PC-9 (cell line): ENCODE measurements at regions of chr3 and their contacts with region 1.

Region 1: DNA sequence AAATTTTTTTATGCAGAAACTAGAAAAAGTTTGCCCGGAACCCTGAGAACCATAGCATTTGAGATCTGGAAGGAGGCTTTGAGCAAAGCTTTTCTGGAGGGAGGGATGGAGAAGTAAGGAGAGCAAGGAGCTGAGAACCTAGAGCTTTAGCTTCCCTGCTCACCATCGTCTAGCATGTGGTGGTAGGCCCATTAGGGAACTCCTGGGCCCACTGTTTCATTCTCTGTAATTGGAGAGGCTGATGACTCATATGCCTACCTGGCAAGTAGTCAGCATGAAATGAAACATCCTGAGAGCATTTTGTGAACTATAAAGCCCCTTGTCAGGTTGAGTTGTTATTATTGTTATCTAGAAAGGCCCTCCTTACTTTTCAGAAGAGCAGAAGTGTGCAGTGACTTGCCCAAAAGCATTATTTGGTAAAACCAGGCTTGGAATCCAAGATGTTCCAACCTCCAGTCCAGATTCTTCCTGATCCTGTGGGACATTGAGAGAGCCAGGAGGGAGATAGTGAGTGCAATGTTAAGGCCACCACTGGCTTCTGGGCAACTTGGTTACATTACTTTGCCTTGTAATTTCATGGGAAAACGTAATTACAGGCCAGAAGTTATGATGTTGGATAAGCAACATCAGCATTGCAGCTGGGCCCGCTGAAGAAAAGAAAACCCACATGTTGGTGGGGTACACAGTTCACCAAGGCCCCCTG is 104.5 kb upstream of the BFSP2 start:
- DNase-seq: no peak
- H3K4me3 ChIP-seq: no peak overlapping the region
- H3K27ac ChIP-seq: no peak overlapping the region
- H3K4me1 ChIP-seq: no peaks in the 10 kb centered on the region
- H3K27me3 ChIP-seq: peaks cover 12% of the 10 kb centered on the region; the same call in 1 of the 2 replicates
- CTCF ChIP-seq: no peak

Region 2: GRCh38 chr3:133106169-133106568 is 189.2 kb before region 1 on chr3:
- CTCF ChIA-PET with region 1: no interaction called
- POLR2A ChIA-PET with region 1: no interaction called
- intact Hi-C with region 1: no loop called
- DNase-seq: no peak
- H3K4me3 ChIP-seq: no peak overlapping the region
- H3K27ac ChIP-seq: no peak overlapping the region
- H3K4me1 ChIP-seq: no peaks in the 10 kb centered on the region
- H3K27me3 ChIP-seq: no peaks in the 10 kb centered on the region
- CTCF ChIP-seq: no peak

Region 3: DNA sequence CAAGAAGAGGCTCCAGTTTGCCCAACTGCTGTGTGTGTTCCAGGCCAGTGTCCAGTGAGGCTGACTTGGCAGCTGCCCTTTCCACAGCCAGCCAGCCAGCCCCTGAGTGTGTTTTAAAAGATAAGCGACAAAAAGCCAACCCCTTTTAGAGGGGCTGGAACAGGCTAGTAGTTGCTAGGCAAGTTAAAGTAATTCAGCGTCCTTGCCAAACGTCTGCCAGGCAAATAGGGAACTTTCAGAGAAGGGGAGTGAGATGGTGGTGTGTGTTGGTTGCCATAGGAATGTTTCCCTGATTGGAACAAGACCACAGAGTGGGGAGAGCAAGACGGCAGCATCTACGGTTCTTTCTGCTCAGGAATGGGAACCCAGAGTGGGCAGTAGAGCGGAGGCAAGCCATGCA is 170.8 kb before region 1 on chr3:
- CTCF ChIA-PET with region 1: interaction called, 14 read pairs
- POLR2A ChIA-PET with region 1: no interaction called
- intact Hi-C with region 1: no loop called
- DNase-seq: no peak
- H3K4me3 ChIP-seq: no peak overlapping the region
- H3K27ac ChIP-seq: no peak overlapping the region
- H3K4me1 ChIP-seq: no peaks in the 10 kb centered on the region
- H3K27me3 ChIP-seq: peaks cover 50% of the 10 kb centered on the region
- CTCF ChIP-seq: no peak